Activated T-helper 1 cell treated with anti-CD3 and anti-CD28 coated beads, Interleukin-12 subunit alpha, Interleukin-12 subunit beta, Interleukin-2, Interleukin-4 antibody, amounts not matched to agents 30 ng/mL and 10 ng/mL and 1 ng/mL, durations not matched to agents 14 hours and 24 hours and 36 hours (primary cell): ENCODE measurements at regions of chr12 and their contacts with region 1.

Region 1: DNA sequence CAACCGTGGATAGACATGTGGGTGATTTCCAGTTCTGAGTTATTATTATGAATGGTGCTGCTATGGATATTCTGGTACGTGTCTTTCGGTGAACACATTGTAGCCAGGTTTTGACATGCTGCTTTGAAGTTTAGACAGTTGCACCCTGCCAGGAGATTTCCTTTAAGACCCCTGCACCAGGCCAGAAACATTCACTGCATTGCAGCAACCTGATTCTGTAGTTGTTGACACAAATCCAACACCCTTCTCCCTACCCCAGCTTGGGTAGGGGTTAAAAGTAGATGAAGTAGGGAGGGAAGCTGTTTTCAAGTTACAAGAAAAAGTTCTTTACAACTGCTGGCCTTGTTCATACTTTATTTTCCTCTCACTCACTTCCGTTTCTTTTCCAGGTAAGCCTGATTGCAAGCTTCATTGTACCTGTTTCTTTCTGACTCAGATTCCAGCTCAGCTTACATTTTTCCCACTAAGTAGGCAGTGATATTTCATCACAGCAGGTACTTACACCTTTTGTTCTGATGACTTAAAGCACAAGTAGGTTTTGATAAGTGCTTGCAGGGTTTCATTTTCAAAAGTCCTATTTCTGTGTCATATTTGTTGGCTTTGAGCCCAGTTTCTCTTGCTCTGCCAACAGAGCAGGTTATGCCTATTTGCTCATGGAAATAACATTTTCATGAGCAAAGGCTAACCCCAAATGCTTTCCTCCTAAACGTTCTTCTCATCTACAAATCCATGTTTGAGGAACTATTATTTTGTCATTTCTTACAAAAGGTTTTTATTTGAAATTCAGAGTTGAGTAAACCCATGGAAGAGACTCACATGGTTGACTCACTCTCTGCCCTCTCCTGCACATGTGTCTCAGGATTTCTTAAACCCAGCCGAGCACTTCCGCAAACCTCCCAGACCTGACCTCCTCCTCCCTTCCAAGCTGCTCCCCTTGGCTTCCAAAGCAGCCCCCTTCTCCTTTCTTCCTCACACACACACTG is 12.1 kb upstream of the LTA4H start:
- DNase-seq: peak; percentile 4
- H3K4me3 Mint-ChIP-seq: peak overlapping the region; percentile 67
- H3K27ac Mint-ChIP-seq: peak overlapping the region; percentile 89
- H3K4me1 Mint-ChIP-seq: peaks cover 47% of the 10 kb centered on the region
- H3K27me3 Mint-ChIP-seq: no peaks in the 10 kb centered on the region

Region 2: DNA sequence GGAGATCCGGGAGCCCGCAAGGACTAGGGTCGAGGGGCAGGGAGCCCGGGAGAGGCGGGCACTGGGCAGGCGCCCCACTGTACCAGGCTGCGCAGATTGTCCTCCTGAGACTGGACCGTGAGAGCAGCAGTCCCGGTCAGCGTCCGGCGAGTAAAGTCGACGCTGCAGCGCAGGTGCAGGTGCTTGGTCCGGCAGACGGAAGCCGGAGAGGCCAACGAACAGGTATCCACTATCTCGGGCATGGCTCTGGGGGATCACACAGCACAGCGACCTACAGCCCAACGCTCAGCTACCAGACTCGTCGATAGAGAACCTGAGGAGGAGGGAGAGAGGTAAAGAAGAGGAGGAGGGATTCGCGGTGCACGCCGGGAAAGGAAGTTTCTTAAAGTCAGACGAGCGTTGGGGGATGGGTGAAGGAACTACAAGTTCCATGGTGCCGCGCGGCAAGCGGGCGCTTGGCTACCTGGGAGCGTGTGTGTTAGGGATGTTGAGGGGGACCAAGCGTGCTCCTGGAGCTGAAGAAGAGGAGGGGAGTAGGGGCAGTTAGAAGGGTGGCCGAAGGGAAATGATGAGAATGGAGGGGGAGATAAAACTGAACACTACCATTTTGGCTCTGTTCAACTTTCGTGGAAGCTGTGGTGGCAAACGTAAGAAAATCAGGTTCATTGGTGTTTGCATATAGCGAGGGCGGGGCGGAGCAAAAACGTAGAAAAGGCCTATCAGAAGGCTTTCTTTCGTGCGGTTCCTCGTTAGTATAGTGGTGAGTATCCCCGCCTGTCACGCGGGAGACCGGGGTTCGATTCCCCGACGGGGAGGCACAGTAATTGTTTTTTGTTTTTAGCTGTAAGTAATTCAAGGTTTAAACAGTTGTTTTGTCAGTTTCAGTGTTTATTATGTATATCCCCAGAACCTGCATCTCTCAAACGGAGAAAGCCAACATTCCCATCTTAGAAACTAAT is 12.0 kb before region 1 on chr12 and contains the start of gene LTA4H:
- intact Hi-C with region 1: loop called (anchors 1 kb)
- DNase-seq: peak; percentile 93
- H3K4me3 Mint-ChIP-seq: no peak within 1 kb of the TSS
- H3K27ac Mint-ChIP-seq: no peak within 1 kb of the TSS
- H3K4me1 Mint-ChIP-seq: peaks cover 10% of the 10 kb centered on the region
- H3K27me3 Mint-ChIP-seq: no peaks in the 10 kb centered on the region
- total RNA-seq, gene LTA4H: 57.3 and 59.6 TPM in 2 replicates

Region 3: GRCh38 chr12:96194971-96195844 is 147.7 kb after region 1 on chr12:
- intact Hi-C with region 1: loop called (anchors 1 kb)
- DNase-seq: peak; percentile 68
- H3K4me3 Mint-ChIP-seq: peak overlapping the region; percentile 96
- H3K27ac Mint-ChIP-seq: peak overlapping the region; percentile 98
- H3K4me1 Mint-ChIP-seq: peaks cover 49% of the 10 kb centered on the region
- H3K27me3 Mint-ChIP-seq: no peaks in the 10 kb centered on the region

Region 4: GRCh38 chr12:96343347-96343954 is 295.9 kb after region 1 on chr12:
- intact Hi-C with region 1: loop called (anchors 5 kb)
- DNase-seq: peak; percentile 21
- H3K4me3 Mint-ChIP-seq: peak overlapping the region; percentile 24
- H3K27ac Mint-ChIP-seq: peak overlapping the region; percentile 79
- H3K4me1 Mint-ChIP-seq: peaks cover 54% of the 10 kb centered on the region
- H3K27me3 Mint-ChIP-seq: no peaks in the 10 kb centered on the region

Region 5: GRCh38 chr12:96445691-96446583 is 398.4 kb after region 1 on chr12:
- intact Hi-C with region 1: loop called (anchors 1 kb)
- DNase-seq: peak; percentile 70
- H3K4me3 Mint-ChIP-seq: peak overlapping the region; percentile 48
- H3K27ac Mint-ChIP-seq: peak overlapping the region; percentile 96
- H3K4me1 Mint-ChIP-seq: peaks cover 51% of the 10 kb centered on the region
- H3K27me3 Mint-ChIP-seq: no peaks in the 10 kb centered on the region